A549 (cell line): ENCODE measurements at regions of chr3 and their contacts with region 1.

Region 1: DNA sequence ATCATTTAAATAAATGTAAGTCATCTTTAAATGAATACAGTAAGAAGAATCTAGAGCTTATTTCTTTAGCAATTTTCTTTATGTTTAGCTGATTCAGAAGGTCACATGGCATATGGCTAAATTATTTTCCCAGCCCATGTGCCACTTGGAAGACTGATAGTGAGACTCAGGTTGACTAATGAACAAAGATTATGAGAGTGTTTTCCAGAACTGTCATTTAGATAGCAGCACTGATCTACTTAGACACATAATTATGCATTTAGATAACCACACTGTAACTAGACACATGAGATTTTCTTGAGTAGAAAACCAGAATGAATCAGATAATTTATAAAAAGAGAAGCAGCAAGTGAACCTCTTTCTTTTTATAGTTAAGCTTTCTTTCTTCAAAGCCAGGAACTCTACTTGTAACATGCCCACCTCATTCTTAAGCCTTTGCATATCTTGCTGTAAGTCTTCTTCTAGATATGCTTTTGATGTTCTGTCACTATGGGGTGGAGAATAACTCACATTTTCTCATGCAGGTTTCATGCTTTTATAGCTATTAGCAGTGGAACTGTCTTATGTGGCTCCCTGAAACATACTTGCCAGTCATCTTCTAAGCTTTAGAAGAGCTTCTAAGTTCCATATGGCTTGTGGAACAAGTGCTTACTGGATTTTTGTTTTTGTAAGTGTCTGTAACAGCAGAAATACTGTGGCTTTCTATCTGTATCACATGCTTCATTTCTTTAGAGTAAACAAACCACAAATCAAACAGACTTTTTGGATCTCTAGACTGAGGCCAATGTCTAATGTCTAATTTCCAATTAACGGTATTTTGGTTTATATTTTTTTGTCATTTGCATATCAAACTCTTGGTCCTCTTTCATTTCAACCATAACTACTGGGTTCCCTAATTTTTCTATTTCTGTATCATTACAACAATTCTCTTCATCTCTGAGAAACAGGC is 101.4 kb downstream of the LMLN start:
- DNase-seq: no peak
- ATAC-seq: no peak
- H3K4me3 ChIP-seq: no peak overlapping the region
- H3K27ac ChIP-seq: no peak overlapping the region
- H3K4me1 ChIP-seq: no peaks in the 10 kb centered on the region
- CTCF ChIP-seq: no peak
- EP300 ChIP-seq: no peak
- POLR2A ChIP-seq: no peak
- RAD21 ChIP-seq: no peak

Region 2: DNA sequence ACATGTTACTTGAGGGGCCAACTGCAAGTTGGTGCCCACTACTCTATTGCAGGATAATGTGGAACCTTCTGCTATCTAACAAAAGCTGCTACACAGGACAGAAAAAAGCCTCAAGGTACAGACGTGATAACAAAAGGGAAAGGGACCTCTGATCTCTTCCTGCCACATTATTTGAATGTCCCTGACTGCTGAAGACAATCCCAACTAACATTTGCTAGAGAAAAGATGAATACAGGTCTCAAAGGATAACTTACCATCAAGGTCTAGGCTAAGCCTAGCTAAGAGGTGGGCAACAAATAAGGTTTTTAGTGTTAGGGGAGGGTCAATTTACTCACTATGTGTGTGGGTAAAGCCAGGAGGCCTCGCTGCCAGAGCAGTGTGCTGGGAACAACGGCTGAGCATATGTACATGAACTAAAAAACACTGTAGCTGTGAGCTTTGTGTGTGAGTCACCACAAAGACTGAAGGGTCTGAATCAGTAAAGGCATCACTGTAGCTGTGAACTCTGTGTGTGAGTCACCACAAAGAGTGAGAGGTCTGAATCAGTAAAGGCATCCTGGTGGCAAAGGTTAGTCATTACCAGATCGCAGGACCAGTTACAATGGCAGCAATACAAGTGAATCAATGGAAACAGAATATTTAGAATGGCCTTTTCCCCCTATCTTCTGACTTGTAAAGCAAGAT is 10.4 kb after region 1 on chr3:
- CTCF ChIA-PET with region 1: interaction called, 13 read pairs
- POLR2A ChIA-PET with region 1: no interaction called
- DNase-seq: peak; percentile 28 to 73
- ATAC-seq: peak; percentile 100
- H3K4me3 ChIP-seq: no peak overlapping the region
- H3K27ac ChIP-seq: no peak overlapping the region
- H3K4me1 ChIP-seq: peaks cover 10% of the 10 kb centered on the region
- CTCF ChIP-seq: no peak
- EP300 ChIP-seq: no peak
- POLR2A ChIP-seq: no peak
- RAD21 ChIP-seq: no peak